ENCODE measurements at regions of chr4 and their contacts with region 1.

Region 1: GRCh38 chr4:11698846-11699590 is 270.3 kb upstream of the HS3ST1 start:
- DNase-seq: peak; percentile 91
- H3K4me3 ChIP-seq: no peak overlapping the region
- H3K27ac ChIP-seq: peak overlapping the region; percentile 91
- H3K4me1 ChIP-seq: peaks cover 56% of the 10 kb centered on the region
- H3K27me3 ChIP-seq: no peaks in the 10 kb centered on the region
- CTCF ChIP-seq: no peak

Region 2: DNA sequence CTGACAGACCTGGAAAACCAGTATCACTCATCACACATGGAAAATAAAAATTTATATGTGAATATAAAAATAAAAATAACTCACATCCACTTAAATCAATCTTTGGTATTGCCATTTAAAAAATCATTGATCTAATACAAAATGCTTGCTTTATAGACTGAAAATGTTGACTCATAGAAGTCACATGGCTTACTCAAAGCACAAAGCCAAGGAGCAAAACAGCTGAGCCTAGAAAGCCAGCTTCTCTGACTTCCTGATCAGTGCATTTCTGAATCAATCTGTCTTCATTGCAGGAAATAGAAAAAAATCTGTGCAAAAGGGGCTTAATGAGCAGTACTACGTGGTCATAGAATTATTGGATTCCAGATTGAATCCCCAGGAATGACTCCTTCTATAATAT is 93.4 kb before region 1 on chr4:
- CTCF ChIA-PET with region 1: no interaction called
- dilution Hi-C with region 1: no loop called
- in situ Hi-C with region 1: no loop called
- intact Hi-C with region 1: no loop called
- DNase-seq: no peak
- H3K4me3 ChIP-seq: no peak overlapping the region
- H3K27ac ChIP-seq: no peak overlapping the region
- H3K4me1 ChIP-seq: peaks cover 16% of the 10 kb centered on the region
- H3K27me3 ChIP-seq: no peaks in the 10 kb centered on the region
- CTCF ChIP-seq: no peak

Region 3: GRCh38 chr4:11635359-11636072 is 63.5 kb before region 1 on chr4:
- CTCF ChIA-PET with region 1: no interaction called
- dilution Hi-C with region 1: no loop called
- in situ Hi-C with region 1: loop called in 1 of 2 experiments (anchors 5 kb)
- intact Hi-C with region 1: loop called (anchors 2 kb)
- DNase-seq: peak; percentile 91
- H3K4me3 ChIP-seq: no peak overlapping the region
- H3K27ac ChIP-seq: peak overlapping the region; percentile 96
- H3K4me1 ChIP-seq: peaks cover 45% of the 10 kb centered on the region
- H3K27me3 ChIP-seq: no peaks in the 10 kb centered on the region
- CTCF ChIP-seq: no peak

Region 4: GRCh38 chr4:11720292-11720691 is 21.3 kb after region 1 on chr4:
- CTCF ChIA-PET with region 1: no interaction called
- dilution Hi-C with region 1: no loop called
- in situ Hi-C with region 1: no loop called
- intact Hi-C with region 1: loop called (anchors 1 kb)
- DNase-seq: peak; percentile 43
- H3K4me3 ChIP-seq: no peak overlapping the region
- H3K27ac ChIP-seq: peak overlapping the region; percentile 6
- H3K4me1 ChIP-seq: peaks cover 7% of the 10 kb centered on the region
- H3K27me3 ChIP-seq: no peaks in the 10 kb centered on the region
- CTCF ChIP-seq: peak; percentile 89 to 95